Endothelial cell of umbilical vein (primary cell): ENCODE measurements at regions of chr2 and their contacts with region 1.

Region 1: GRCh38 chr2:169798718-169799592 is at the start of gene SSB:
- DNase-seq: peak; percentile 93
- H3K4me3 ChIP-seq: peak within 1 kb of the TSS; percentile 91 to 99 (median 97)
- H3K27ac ChIP-seq: peak within 1 kb of the TSS; percentile 64
- H3K4me1 ChIP-seq: peaks cover 14% of the 10 kb centered on the region
- H3K27me3 ChIP-seq: no peaks in the 10 kb centered on the region
- CTCF ChIP-seq: no peak
- POLR2A ChIP-seq: peak; percentile 96
- total RNA-seq, gene SSB: 124 and 125 TPM in 2 replicates

Region 2: DNA sequence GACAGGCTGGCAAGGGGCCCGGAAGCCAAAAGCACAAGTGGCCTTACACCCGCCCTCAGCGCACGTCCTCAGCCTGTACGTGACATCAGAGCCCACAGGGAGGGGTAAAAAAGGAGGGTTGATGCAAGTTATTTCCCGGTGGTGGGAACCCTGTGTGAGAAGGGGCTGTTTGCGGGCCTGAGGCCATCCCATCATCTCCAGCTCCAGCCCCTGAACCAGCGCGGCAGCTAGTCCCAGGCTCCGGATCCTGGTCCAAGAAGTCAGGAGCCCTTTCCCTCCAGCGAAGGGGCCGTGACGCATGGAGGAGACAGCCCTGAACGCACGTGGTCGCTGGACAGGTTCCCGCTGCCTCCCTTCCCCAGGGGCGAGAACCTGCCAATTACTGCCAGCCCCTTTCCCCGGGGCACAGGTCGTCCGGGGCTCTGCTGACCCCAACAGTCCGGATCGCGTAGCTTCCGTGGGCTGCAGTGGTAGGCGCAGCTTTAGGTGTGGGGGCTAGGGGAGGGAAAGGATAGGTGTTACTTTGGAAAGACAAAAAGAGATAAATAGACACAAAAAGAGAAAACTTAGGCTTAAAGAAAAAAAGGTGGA is 435.3 kb before region 1 on chr2:
- CTCF ChIA-PET with region 1: no interaction called
- POLR2A ChIA-PET with region 1: no interaction called
- dilution Hi-C with region 1: no loop called
- intact Hi-C with region 1: loop called (anchors 10 kb)
- DNase-seq: peak; percentile 6
- H3K4me3 ChIP-seq: peak overlapping the region in 1 of 3 experiments; percentile 25
- H3K27ac ChIP-seq: no peak overlapping the region
- H3K4me1 ChIP-seq: peaks cover 35% of the 10 kb centered on the region
- H3K27me3 ChIP-seq: peaks cover 32 to 53% of the 10 kb centered on the region in 2 experiments
- CTCF ChIP-seq: no peak
- POLR2A ChIP-seq: no peak